ENCODE measurements at regions of chr2 and their contacts with region 1.

Region 1: GRCh38 chr2:36663851-36664695 is 32.4 kb upstream of the VIT start:
- DNase-seq: peak; percentile 77
- H3K4me3 Mint-ChIP-seq: no peak overlapping the region
- H3K27ac Mint-ChIP-seq: no peak overlapping the region
- H3K4me1 Mint-ChIP-seq: no peaks in the 10 kb centered on the region
- H3K27me3 Mint-ChIP-seq: peaks cover 7% of the 10 kb centered on the region

Region 2: DNA sequence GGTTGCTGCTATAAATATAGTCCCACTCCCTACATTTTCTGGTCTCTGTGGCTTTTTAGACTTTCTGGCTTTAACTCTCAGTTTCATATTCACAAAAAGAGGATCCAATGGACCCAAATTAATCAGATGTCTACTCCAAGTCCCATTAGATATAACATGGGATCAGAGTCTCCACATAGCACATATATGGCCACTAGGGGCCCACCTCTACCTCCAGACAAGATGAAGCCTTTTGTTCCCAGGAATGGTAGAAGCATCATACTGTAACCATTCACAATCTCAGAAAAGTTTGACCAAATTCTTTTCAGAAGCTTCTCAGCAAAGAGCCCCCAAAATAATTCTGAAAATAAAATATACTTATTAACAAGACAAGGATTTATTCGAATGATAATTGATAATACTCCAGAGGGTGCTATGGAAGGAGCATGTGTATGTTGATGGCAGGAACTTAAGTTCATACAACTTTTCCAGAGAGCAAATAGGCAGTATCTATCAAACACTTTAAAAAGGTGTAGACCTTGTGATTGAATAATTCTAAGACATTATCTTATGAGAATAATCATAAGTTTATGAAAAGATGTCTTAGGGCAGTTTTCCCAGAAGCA is 690.8 kb before region 1 on chr2:
- intact Hi-C with region 1: loop called (anchors 5 kb)
- DNase-seq: no peak
- H3K4me3 Mint-ChIP-seq: no peak overlapping the region
- H3K27ac Mint-ChIP-seq: no peak overlapping the region
- H3K4me1 Mint-ChIP-seq: peaks cover 3% of the 10 kb centered on the region
- H3K27me3 Mint-ChIP-seq: peaks cover 16% of the 10 kb centered on the region

Region 3: DNA sequence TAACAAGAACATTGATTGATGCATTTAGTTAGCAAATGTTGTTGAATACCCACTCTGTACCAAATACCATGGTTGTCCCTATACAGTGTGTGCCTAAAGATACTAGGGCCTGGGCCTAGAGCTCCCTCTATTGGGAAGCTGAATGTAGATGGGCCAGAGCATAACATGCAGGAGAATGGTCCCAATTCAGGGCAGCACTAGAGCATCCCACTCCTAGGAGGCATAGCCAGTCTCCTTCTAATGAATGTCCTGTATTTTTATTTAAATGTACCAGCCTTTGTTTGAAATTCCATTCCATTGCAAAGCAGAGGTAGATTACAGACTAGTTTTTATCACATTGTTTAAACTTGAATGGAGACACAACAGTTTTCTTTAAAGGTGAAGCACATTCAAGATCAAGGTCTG is 156.7 kb before region 1 on chr2:
- intact Hi-C with region 1: loop called (anchors 10 kb)
- DNase-seq: peak; percentile 79
- H3K4me3 Mint-ChIP-seq: no peak overlapping the region
- H3K27ac Mint-ChIP-seq: no peak overlapping the region
- H3K4me1 Mint-ChIP-seq: no peaks in the 10 kb centered on the region
- H3K27me3 Mint-ChIP-seq: no peaks in the 10 kb centered on the region

Region 4: GRCh38 chr2:36530178-36530982 is 133.7 kb before region 1 on chr2:
- intact Hi-C with region 1: loop called (anchors 10 kb)
- DNase-seq: no peak
- H3K4me3 Mint-ChIP-seq: no peak overlapping the region
- H3K27ac Mint-ChIP-seq: no peak overlapping the region
- H3K4me1 Mint-ChIP-seq: peaks cover 3% of the 10 kb centered on the region
- H3K27me3 Mint-ChIP-seq: no peaks in the 10 kb centered on the region

Region 5: DNA sequence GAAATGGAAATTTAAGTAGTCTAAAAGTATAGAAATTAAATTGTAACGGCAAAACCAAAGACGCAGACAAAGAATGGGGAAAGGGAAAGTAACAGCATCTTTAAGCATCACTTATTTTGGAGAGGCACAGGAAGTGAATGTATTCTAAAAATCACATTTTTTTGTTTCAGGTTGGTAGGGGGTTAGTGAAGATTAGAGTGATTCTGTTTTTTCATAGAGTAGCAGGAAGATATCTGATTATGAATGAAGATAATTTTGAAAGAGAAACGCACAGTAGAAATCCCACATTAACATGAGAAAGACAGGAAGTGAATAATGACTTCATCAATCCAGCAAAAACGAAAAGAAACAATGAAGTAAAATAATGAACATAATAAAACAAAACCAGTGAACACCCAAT is 171.1 kb after region 1 on chr2:
- intact Hi-C with region 1: no loop called
- DNase-seq: no peak
- H3K4me3 Mint-ChIP-seq: no peak overlapping the region
- H3K27ac Mint-ChIP-seq: peak overlapping the region; percentile 73
- H3K4me1 Mint-ChIP-seq: peaks cover 7% of the 10 kb centered on the region
- H3K27me3 Mint-ChIP-seq: no peaks in the 10 kb centered on the region